Mammary epithelial cell (primary cell): ENCODE measurements at regions of chr1 and their contacts with region 1.

Region 1: GRCh38 chr1:78676347-78676982 is 26.8 kb downstream of the IFI44 start:
- DNase-seq: peak; percentile 37
- H3K4me3 ChIP-seq: no peak overlapping the region
- H3K27ac ChIP-seq: no peak overlapping the region
- H3K4me1 ChIP-seq: no peaks in the 10 kb centered on the region
- H3K27me3 ChIP-seq: no peaks in the 10 kb centered on the region
- CTCF ChIP-seq: peak; percentile 74 to 77

Region 2: DNA sequence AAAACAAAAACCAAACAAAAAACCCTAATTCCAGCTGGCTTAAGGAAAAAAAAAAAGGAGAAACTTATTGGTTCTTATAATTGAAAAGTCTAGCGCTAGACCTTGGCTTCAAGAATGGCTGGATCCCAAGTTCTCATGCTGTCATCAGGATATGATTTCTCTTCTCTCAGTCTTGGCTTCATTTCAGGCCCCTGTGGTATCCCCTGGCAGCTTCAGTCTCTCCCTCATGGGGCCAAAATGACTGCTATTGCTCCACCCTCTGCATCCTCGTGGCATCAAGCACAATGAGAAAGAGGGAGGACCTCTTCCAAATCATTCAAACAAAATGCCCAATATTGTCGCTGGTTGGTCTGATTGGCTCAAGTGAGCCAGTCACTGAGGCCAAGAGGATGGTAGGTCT is 550.0 kb before region 1 on chr1:
- CTCF ChIA-PET with region 1: no interaction called
- dilution Hi-C with region 1: no loop called
- in situ Hi-C with region 1: loop called in 1 of 2 experiments (anchors 10 kb)
- intact Hi-C with region 1: loop called (anchors 2 kb)
- DNase-seq: no peak
- H3K4me3 ChIP-seq: no peak overlapping the region
- H3K27ac ChIP-seq: no peak overlapping the region
- H3K4me1 ChIP-seq: no peaks in the 10 kb centered on the region
- H3K27me3 ChIP-seq: no peaks in the 10 kb centered on the region
- CTCF ChIP-seq: no peak

Region 3: GRCh38 chr1:78132174-78132947 is 544.1 kb before region 1 on chr1:
- CTCF ChIA-PET with region 1: no interaction called
- dilution Hi-C with region 1: no loop called
- in situ Hi-C with region 1: loop called in 1 of 2 experiments (anchors 10 kb)
- intact Hi-C with region 1: loop called (anchors 2 kb)
- DNase-seq: no peak
- H3K4me3 ChIP-seq: no peak overlapping the region
- H3K27ac ChIP-seq: no peak overlapping the region
- H3K4me1 ChIP-seq: no peaks in the 10 kb centered on the region
- H3K27me3 ChIP-seq: no peaks in the 10 kb centered on the region
- CTCF ChIP-seq: no peak

Region 4: GRCh38 chr1:78536427-78536826 is 140.0 kb before region 1 on chr1:
- CTCF ChIA-PET with region 1: no interaction called
- dilution Hi-C with region 1: no loop called
- in situ Hi-C with region 1: no loop called
- intact Hi-C with region 1: no loop called
- DNase-seq: peak; percentile 34
- H3K4me3 ChIP-seq: no peak overlapping the region
- H3K27ac ChIP-seq: no peak overlapping the region
- H3K4me1 ChIP-seq: no peaks in the 10 kb centered on the region
- H3K27me3 ChIP-seq: no peaks in the 10 kb centered on the region
- CTCF ChIP-seq: no peak

Region 5: DNA sequence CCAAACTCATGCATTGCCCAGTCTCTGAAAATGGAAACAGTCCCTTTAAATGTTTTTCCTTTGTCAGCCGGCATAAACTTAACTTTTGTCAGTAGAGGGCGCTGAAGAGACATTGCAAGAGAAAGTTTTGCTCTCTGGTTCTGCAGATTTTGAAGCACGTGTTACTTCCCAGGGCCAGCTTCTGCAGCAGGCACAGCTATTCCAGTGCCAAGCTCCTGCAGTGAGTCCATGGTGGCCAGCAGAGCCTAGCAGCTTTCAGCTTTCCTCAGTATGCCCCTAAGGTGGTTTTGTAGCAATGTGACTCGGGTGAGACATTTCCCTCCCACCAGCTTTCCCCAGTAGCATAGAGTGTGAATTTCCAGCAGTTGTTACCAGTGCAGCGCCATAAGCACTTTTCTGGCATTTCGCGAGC is 58.8 kb before region 1 on chr1:
- CTCF ChIA-PET with region 1: no interaction called
- dilution Hi-C with region 1: no loop called
- in situ Hi-C with region 1: loop called (anchors 10 kb)
- intact Hi-C with region 1: loop called (anchors 1 kb)
- DNase-seq: peak; percentile 74
- H3K4me3 ChIP-seq: no peak overlapping the region
- H3K27ac ChIP-seq: no peak overlapping the region
- H3K4me1 ChIP-seq: peaks cover 16% of the 10 kb centered on the region
- H3K27me3 ChIP-seq: no peaks in the 10 kb centered on the region
- CTCF ChIP-seq: peak; percentile 77 to 85